Activated CD4-positive, alpha-beta memory T cell treated with anti-CD3 and anti-CD28 coated beads, Interleukin-2, amount 10 ng/mL, durations not matched to agents 7 days and 5 days (primary cell): ENCODE measurements at regions of chr5 and their contacts with region 1.

Region 1: DNA sequence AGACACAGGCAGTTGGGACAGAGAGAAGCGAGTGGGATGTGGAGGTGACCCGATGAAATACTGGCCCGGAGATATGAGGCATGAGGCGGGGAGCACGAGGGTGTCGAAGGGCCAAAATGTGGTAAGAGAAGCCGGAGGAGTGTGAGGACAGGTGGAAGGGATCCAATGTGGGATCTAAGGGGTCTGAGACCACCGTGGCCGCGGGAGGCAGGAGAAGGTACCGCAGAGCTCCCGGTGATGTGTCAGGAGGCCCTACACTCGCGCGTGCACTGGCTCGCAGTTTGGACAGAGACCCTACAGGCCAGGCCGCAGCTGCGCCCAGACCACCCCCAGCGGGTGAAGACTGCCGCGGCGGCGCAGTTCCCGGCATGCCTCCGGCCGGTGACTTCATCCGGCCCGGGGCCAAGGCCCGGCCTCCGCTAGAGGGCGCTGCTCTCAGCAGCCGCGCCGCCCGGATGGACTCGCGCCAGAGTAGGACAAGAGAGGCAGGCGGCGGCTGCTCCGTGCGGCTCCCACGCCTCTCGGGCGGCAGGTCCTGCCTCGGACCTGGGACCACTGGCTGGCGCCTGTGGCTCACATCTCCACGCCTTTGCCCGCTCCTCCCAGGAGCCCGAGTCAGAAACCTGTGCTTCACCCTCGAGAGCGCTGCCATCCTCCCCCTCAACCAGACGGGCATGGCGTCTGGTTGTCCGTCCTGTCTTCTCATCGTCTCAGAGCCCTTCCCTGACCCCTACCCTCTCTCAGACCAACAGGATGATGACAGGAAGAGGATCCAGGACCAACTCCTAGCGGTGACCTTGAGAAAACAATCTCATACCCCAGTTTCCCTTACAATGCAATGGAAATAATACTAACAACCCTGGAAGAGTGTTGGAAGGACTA is 35.4 kb upstream of the STING1 start:
- DNase-seq: peak; percentile 92
- H3K4me3 Mint-ChIP-seq: peak overlapping the region; percentile 85
- H3K27ac Mint-ChIP-seq: peak overlapping the region; percentile 83
- H3K4me1 Mint-ChIP-seq: peaks cover 41% of the 10 kb centered on the region
- H3K27me3 Mint-ChIP-seq: peaks cover 2% of the 10 kb centered on the region

Region 2: DNA sequence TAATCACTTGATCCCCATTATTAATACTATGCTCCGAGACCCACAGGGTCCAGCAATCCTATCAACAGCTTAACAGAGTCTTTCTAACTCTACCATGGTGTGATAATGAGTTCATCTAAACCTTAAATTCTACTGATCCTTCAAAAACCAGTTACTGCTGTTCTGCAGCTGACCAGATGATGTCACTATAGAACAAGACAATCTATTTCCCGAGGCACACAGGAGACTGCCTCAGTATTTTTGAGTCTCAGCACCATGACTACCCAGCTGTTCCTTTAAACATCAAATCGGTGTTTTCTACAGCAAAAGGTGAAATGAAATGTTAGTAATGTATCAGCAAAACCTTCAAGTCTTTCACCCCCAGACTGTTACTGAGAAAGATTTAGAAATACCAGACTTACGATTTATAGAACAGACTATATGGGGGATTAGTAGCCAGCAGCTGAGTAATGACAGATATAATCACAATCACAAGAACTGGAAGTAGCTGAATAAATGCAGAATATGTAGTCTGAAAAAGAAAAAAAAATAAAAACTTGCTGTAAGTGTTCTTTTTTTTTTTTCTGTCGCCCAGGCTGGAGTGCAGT is 95.5 kb before region 1 on chr5:
- CTCF ChIA-PET with region 1: interaction called, 329 read pairs
- POLR2A ChIA-PET with region 1: interaction called, 43 read pairs
- DNase-seq: peak; percentile 59
- H3K4me3 Mint-ChIP-seq: no peak overlapping the region
- H3K27ac Mint-ChIP-seq: peak overlapping the region; percentile 36
- H3K4me1 Mint-ChIP-seq: peaks cover 46% of the 10 kb centered on the region
- H3K27me3 Mint-ChIP-seq: no peaks in the 10 kb centered on the region

Region 3: DNA sequence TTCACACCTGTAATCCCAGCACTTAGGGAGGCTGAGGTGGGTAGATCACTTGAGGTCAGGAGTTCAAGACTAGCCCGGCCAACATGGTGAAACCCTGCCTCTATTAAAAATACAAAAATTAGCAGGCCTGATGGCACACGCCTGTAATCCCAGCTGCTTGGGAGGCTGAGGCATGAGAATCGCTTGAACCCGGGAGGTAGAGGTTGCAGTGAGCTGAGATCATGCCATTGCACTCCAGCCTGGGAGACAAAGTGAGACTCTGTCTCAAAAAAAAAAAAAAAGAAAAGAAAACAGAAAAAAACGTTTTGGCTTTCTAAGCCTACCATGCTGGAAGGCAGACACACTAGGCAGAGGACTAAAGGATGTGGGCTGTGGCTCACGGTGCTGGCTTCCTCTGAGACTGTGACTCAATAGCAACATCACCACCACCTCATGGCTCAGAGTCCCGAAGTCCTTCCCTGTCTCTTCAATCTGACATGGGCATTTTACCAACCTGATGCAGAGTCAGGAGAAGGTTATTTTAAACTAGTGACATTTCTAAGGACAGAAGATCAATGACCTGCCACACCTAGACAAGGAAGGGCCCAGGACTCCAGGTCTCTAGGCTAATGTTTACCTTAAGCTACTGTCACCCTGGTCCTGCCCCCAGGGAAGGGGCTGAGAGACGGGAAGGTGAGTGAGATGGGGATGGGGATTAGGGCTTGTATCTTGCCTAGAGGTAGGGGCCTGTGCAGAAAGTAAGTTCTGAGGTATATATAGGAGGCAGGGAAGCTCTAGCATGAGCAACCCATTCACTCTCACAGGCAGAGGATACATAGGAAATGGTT is 59.1 kb before region 1 on chr5:
- CTCF ChIA-PET with region 1: interaction called, 17 read pairs
- POLR2A ChIA-PET with region 1: interaction called, 3 read pairs
- DNase-seq: peak; percentile 90
- H3K4me3 Mint-ChIP-seq: peak overlapping the region; percentile 68
- H3K27ac Mint-ChIP-seq: peak overlapping the region; percentile 98
- H3K4me1 Mint-ChIP-seq: peaks cover 68% of the 10 kb centered on the region
- H3K27me3 Mint-ChIP-seq: no peaks in the 10 kb centered on the region

Region 4: GRCh38 chr5:139492700-139493192 is 25.2 kb before region 1 on chr5:
- CTCF ChIA-PET with region 1: interaction called, 24 read pairs
- POLR2A ChIA-PET with region 1: no interaction called
- DNase-seq: no peak
- H3K4me3 Mint-ChIP-seq: no peak overlapping the region
- H3K27ac Mint-ChIP-seq: no peak overlapping the region
- H3K4me1 Mint-ChIP-seq: peaks cover 32% of the 10 kb centered on the region
- H3K27me3 Mint-ChIP-seq: no peaks in the 10 kb centered on the region

Region 5: DNA sequence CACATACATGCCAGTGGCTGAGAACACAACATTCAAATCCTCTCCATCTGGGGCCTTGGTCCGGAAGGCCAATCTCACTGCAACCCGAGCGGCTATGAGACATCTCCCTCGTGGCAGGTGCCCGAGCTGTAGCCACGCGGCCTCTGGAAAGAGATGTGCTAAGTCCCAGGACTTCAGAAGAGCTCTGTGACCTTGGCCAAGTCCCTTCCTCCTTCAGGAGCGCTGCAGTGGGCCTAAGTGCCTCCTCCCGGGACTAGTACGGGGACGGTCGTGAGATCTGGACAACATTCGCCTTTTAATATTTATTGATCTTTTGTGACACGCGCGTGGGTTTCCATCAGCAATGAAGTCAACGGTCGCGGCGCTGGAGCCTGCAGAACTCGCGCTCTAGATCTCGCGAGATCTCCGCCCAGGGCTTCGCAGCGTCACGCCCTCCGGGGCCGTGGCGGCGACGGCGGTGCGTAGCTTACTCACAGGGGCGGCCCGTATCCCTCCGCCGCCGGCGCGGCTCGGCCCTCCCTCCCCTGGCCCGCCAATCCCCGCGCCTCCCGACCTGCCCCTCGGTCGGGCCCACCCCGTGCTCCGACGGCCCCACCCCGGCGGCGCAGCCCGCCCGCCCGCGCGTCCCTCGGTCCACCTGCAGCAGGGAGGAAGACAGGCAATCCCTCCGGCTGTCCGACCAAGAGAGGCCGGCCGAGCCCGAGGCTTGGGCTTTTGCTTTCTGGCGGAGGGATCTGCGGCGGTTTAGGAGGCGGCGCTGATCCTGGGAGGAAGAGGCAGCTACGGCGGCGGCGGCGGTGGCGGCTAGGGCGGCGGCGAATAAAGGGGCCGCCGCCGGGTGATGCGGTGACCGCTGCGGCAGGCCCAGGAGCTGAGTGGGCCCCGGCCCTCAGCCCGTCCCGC is 43.1 kb after region 1 on chr5 and contains the start of gene UBE2D2:
- CTCF ChIA-PET with region 1: interaction called, 7 read pairs
- POLR2A ChIA-PET with region 1: interaction called, 17 read pairs
- DNase-seq: peak; percentile 98
- H3K4me3 Mint-ChIP-seq: peak within 1 kb of the TSS; percentile 95
- H3K27ac Mint-ChIP-seq: peak within 1 kb of the TSS; percentile 95
- H3K4me1 Mint-ChIP-seq: peaks cover 36% of the 10 kb centered on the region
- H3K27me3 Mint-ChIP-seq: no peaks in the 10 kb centered on the region
- total RNA-seq, gene UBE2D2: 241 to 244 TPM